Right ventricle myocardium superior (tissue), 1 donor: ENCODE measurements at regions of chr1 and their contacts with region 1.

Region 1: GRCh38 chr1:161738627-161739287 is 10.8 kb upstream of the DUSP12 start:
- DNase-seq: peak; percentile 70
- ATAC-seq: peak; percentile 71

Region 2: DNA sequence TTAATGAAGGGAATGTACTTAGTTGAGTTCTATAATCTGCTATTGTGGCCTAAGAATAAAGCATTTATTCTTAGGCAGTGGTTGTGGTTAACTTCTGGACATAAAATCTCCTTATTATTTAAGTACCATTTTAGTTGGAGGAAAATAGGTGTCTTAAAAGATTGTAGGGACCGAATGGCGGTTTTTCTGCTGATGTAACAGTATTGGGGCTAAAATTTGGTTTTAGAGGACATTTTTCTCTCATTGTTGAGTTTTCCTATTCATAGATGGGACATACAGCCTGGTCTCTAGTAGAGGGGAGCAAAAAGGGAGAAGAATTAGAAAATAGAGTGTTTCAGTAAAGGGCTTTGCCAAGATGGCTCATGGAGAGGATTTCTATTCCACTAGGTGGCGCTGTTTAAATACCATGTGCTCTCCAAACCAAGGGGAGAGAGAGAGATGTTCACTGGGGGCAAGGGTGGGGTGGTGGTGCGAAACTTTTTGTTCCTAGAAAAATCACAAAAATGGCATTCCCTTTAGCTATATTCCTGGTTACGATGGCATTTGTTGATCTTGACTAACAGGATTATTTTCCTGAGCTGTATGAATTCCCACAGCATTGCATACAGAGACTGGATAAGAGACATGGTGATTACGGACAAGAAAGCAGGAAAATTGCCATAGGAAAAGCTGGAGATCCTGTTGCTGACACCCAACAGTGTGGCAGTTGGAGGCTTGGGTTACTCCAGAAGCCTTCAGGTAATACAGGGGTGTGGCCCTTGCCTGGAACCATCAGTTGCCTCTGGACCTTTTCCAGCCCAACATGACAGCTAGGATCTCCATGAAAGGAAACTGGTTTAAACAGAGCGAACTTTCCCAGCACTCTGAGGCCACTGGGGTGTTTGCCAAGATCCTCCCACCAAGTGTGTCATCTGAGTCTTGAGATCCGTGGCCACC is 251.7 kb before region 1 on chr1:
- intact Hi-C with region 1: loop called (anchors 10 kb)
- DNase-seq: peak; percentile 51
- ATAC-seq: peak; percentile 79

Region 3: DNA sequence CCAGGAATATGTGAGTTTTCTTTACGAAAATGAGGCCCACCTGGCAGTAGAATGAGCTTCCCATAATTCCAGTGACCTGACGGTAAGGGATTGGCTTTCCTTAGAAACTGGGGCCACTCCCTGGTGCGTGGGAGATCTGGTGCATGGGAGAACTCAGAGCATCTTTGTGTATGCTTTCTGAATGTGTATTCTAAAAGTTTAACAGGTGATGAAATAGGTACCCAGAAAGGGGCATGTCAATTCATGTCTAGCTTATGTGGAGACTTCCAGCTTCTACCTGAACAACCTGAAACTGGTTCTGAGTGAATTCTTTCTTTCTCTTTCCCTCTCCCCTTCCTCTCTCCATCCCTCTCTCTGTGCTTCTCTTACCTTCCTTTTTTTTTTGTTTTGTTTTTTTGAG is 46.9 kb before region 1 on chr1:
- intact Hi-C with region 1: no loop called
- DNase-seq: no peak
- ATAC-seq: no peak